ENCODE measurements at regions of chr16 and their contacts with region 1.

Region 1: GRCh38 chr16:23149349-23149996 is at the start of gene USP31:
- DNase-seq: peak; percentile 89
- H3K4me3 Mint-ChIP-seq: peak within 1 kb of the TSS; percentile 96
- H3K27ac Mint-ChIP-seq: peak within 1 kb of the TSS; percentile 96
- H3K4me1 Mint-ChIP-seq: peaks cover 31% of the 10 kb centered on the region
- H3K27me3 Mint-ChIP-seq: peaks cover 11% of the 10 kb centered on the region
- total RNA-seq, gene USP31: 11.3 and 11.6 TPM in 2 replicates

Region 2: DNA sequence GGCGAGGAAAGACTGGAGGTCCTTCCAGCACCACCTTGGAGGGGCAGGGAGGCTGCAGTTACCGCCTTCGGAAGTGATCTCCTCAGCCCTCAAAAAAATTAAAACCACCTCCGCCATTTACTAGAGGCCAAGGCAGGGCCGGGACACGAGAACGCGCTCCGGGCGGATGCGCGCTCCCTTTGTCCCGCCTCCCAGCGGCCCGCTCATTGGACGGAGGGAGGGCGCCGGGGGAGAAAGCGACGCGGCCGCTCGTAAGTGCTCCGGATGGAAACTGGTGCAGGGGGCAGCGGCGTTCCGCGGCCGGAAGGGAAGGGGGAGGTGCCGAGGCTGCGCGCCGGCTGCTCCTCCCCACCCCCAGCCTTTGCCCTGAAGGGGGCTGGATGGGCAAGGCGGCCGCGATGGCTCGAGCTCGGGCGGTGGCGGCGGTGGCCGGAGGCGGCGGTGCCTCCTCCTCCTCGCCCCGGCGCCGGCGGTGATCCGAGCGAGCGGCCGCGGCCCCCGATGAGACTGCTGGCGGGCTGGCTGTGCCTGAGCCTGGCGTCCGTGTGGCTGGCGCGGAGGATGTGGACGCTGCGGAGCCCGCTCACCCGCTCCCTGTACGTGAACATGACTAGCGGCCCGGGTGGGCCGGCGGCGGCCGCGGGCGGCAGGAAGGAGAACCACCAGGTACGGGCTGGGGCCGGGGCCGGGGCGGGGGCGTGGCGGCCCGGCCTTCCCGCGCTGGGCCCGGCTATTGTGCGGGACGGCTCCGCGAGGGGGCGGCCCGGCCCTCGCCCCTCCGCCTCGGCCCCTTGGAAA is 1550.0 kb before region 1 on chr16 and contains the start of gene METTL9:
- intact Hi-C with region 1: loop called (anchors 5 kb)
- DNase-seq: peak; percentile 95
- H3K4me3 Mint-ChIP-seq: peak within 1 kb of the TSS; percentile 96
- H3K27ac Mint-ChIP-seq: peak within 1 kb of the TSS; percentile 87
- H3K4me1 Mint-ChIP-seq: peaks cover 55% of the 10 kb centered on the region
- H3K27me3 Mint-ChIP-seq: peaks cover 3% of the 10 kb centered on the region
- total RNA-seq, gene METTL9: 58.8 and 64.9 TPM in 2 replicates

Region 3: DNA sequence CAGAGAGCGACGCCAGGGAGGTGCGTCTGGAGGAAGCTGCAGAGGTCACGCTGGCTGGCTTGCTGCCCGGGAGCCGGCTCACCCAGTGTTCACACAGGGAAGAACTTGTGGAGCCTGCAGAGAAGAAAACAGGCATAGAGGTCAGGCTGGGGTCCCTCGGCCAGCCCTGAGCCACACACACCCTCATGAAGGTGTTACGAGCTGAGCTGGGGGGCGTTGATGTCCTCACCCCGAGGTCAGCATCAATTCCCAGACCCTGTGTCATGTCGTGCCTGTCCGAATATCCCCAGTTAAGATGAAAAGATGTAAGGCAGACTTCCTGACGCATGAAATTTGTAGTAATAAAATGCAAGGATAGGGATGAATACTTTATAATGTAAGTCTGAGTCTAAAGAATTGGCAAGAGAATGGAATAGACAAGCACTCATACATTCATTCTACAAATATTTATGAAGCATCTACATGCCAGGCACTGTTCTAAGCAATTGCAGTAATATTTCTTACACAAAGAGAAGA is 77.3 kb before region 1 on chr16:
- intact Hi-C with region 1: no loop called
- DNase-seq: no peak
- H3K4me3 Mint-ChIP-seq: no peak overlapping the region
- H3K27ac Mint-ChIP-seq: no peak overlapping the region
- H3K4me1 Mint-ChIP-seq: no peaks in the 10 kb centered on the region
- H3K27me3 Mint-ChIP-seq: no peaks in the 10 kb centered on the region

Region 4: DNA sequence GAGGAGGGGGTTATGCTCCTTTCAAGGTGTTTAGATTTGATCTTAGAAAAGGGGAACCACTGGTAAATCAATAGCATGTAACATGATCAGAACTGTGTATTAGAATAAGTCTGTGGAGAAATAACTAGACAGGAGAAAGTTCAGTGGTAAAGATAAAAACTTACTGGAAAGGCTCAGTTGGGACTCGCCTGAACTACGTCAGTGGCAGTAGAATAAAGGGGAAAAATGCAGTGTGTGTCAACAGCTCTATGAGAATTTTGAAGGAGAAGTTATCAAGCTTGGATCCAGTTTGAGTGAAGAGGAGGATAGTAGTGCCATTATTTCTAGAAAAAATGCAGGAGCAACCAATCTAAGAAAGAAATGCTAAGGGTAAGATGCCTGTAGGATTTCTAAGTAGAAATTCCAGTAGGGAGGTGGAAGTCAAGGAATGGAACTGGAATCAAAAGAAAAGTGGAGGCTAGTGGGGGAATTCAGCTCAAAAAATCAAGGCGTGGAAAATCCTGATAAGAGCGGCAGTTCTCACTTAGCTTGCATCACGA is 48.4 kb before region 1 on chr16:
- intact Hi-C with region 1: loop called (anchors 2 kb)
- DNase-seq: no peak
- H3K4me3 Mint-ChIP-seq: no peak overlapping the region
- H3K27ac Mint-ChIP-seq: no peak overlapping the region
- H3K4me1 Mint-ChIP-seq: peaks cover 13% of the 10 kb centered on the region
- H3K27me3 Mint-ChIP-seq: peaks cover 1% of the 10 kb centered on the region